ENCODE measurements at regions of chr16 and their contacts with region 1.

Region 1: GRCh38 chr16:75385507-75386152 is 47.7 kb downstream of the CFDP1 start:
- DNase-seq: peak; percentile 73
- ATAC-seq: no peak
- H3K4me3 ChIP-seq: no peak overlapping the region
- H3K27ac ChIP-seq: no peak overlapping the region
- H3K4me1 ChIP-seq: no peaks in the 10 kb centered on the region; the same call in 1 of the 2 replicates
- H3K27me3 ChIP-seq: no peaks in the 10 kb centered on the region
- CTCF ChIP-seq: peak; percentile 71

Region 2: GRCh38 chr16:75238132-75238852 is 147.3 kb before region 1 on chr16:
- CTCF ChIA-PET with region 1: interaction called, 7 read pairs
- POLR2A ChIA-PET with region 1: no interaction called
- intact Hi-C with region 1: loop called (anchors 1 kb)
- DNase-seq: no peak
- ATAC-seq: no peak
- H3K4me3 ChIP-seq: no peak overlapping the region
- H3K27ac ChIP-seq: no peak overlapping the region
- H3K4me1 ChIP-seq: peaks cover 9% of the 10 kb centered on the region; the same call in 1 of the 2 replicates
- H3K27me3 ChIP-seq: no peaks in the 10 kb centered on the region
- CTCF ChIP-seq: no peak

Region 3: DNA sequence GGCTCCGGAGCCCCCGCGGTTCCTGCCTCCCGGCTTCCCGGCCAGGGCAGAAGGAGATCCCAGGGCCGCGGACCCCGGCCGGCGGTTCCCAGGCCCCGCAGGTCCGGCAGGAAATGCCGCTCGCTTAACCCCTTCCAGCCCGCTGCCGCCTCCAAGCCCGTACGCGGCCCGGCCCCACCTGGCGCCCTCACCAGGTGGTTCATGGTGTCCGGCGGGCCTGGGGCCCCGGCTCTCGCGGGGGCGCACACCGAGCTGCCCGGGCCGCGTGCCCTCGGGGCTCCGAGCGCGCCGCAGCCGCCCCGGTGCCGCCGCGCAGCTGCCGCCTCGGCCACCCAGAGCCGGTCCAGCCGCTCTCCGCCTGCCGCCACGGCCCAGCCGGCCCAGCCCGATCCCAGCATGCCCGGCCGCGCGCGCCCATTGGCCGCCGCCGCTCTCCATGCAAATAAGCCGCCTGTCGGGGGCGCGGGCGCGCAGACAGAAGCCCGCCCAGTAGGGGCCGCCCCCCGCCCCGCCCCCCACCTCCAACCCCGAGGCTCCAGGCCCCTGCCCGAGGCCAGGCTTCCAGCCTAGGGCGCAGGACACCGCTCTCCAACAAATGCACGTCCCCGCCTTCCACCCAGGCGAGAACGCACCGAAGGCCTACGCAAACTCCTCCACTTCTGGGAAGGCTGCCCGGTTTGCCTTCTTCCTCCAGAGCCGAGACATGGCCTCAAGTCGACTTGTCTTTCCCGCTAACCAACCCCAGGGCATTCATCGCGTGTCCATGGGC is 134.2 kb before region 1 on chr16 and contains the start of gene BCAR1:
- CTCF ChIA-PET with region 1: no interaction called
- POLR2A ChIA-PET with region 1: no interaction called
- intact Hi-C with region 1: loop called (anchors 5 kb)
- DNase-seq: peak; percentile 77
- ATAC-seq: peak; percentile 76
- H3K4me3 ChIP-seq: peak within 1 kb of the TSS; percentile 89
- H3K27ac ChIP-seq: peak within 1 kb of the TSS; percentile 50
- H3K4me1 ChIP-seq: peaks cover 54% of the 10 kb centered on the region
- H3K27me3 ChIP-seq: no peaks in the 10 kb centered on the region
- CTCF ChIP-seq: no peak
- total RNA-seq, gene BCAR1: 49.3 and 68.0 TPM in 2 replicates

Region 4: DNA sequence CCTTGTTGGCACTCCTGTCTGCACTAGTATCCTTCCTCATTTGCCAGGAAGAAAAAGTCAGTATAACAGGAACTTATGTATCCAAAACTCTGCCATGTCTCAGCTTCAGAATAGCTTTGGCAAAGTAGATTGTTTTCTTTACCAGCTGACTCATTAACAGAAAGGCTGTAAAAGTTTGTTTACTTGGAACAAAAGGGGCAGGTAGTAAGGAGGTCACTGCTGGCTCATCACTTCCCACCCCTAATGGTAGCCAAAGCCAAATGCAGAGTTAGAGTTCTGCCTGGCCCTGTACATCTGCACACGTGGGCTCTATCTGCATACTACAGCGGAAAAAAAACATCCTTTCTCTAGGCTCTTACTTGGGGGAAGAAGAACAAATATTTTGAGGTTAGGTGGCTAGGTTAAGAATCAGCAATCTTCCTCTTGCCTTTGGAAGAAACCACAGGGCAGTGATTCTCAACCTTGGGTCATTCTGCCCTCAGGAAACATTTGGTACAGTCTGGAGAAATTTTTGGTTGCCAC is 43.3 kb before region 1 on chr16:
- CTCF ChIA-PET with region 1: no interaction called
- POLR2A ChIA-PET with region 1: no interaction called
- intact Hi-C with region 1: loop called (anchors 1 kb)
- DNase-seq: peak; percentile 88
- ATAC-seq: peak; percentile 95
- H3K4me3 ChIP-seq: no peak overlapping the region; the same call in 1 of the 2 replicates
- H3K27ac ChIP-seq: peak overlapping the region; percentile 85
- H3K4me1 ChIP-seq: peaks cover 40% of the 10 kb centered on the region
- H3K27me3 ChIP-seq: no peaks in the 10 kb centered on the region
- CTCF ChIP-seq: no peak

Region 5: GRCh38 chr16:75495076-75495674 is 109.5 kb after region 1 on chr16 and contains the start of gene CHST6:
- CTCF ChIA-PET with region 1: no interaction called
- POLR2A ChIA-PET with region 1: no interaction called
- intact Hi-C with region 1: no loop called
- DNase-seq: no peak
- ATAC-seq: no peak
- H3K4me3 ChIP-seq: no peak within 1 kb of the TSS
- H3K27ac ChIP-seq: no peak within 1 kb of the TSS
- H3K4me1 ChIP-seq: peaks cover 5% of the 10 kb centered on the region; the same call in 1 of the 2 replicates
- H3K27me3 ChIP-seq: no peaks in the 10 kb centered on the region
- CTCF ChIP-seq: no peak
- total RNA-seq, gene CHST6: 0.35 and 0.91 TPM in 2 replicates

Region 6: DNA sequence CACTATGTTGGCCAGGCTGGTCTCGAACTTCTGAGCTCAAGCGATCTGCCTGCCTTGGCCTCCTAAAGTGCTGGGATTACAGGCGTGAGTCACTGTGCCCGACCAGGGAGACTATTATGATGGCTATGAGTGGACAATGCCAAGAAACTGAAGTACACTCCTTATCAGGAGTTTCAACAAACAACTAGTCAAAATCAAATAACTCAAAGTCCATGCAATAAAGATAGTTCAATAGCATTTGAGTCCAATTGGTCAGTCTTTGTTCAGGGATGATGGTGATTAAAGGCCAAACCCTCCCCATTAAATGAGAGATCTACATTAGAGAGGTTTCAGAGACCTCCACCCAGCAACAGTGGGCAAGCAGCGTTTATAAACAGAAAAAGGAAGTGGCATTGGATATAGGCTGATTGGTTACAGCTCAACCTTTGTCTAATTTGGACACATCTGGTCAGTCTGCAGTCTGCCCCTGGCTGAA is 142.2 kb after region 1 on chr16:
- CTCF ChIA-PET with region 1: no interaction called
- POLR2A ChIA-PET with region 1: no interaction called
- intact Hi-C with region 1: no loop called
- DNase-seq: no peak
- ATAC-seq: no peak
- H3K4me3 ChIP-seq: no peak overlapping the region
- H3K27ac ChIP-seq: no peak overlapping the region
- H3K4me1 ChIP-seq: no peaks in the 10 kb centered on the region
- H3K27me3 ChIP-seq: no peaks in the 10 kb centered on the region
- CTCF ChIP-seq: no peak

Region 7: DNA sequence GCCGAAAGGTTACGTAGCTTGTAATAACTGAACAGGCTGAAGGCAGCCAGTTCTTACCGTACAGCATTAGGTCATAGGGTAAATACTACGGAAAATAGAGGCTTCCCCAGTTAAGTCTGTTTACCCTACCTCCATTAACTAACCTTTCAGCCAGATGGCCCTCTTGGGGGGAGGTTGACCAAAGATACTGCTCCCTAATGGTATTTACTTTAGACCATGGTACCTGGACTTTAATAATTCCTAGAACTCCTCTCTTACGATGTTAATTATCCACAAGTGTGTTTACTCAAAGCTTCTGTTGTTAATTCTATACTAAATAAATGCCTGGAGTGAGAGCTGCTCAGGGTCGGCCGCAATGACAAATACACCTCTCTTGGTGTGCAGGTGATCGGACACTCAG is 247.2 kb after region 1 on chr16:
- CTCF ChIA-PET with region 1: no interaction called
- POLR2A ChIA-PET with region 1: no interaction called
- intact Hi-C with region 1: no loop called
- DNase-seq: no peak
- ATAC-seq: no peak
- H3K4me3 ChIP-seq: no peak overlapping the region
- H3K27ac ChIP-seq: no peak overlapping the region
- H3K4me1 ChIP-seq: no peaks in the 10 kb centered on the region
- H3K27me3 ChIP-seq: no peaks in the 10 kb centered on the region
- CTCF ChIP-seq: no peak